H1 (cell line): ENCODE measurements at regions of chr2 and their contacts with region 1.

Region 1: GRCh38 chr2:96470636-96471035 is 34.5 kb downstream of the NEURL3 start:
- DNase-seq: peak; percentile 77 to 96
- H3K4me3 ChIP-seq: peak overlapping the region in 1 of 4 experiments; percentile 45; a peak in 2 of 8 replicates
- H3K27ac ChIP-seq: no peak overlapping the region
- H3K4me1 ChIP-seq: no peaks in the 10 kb centered on the region
- H3K27me3 ChIP-seq: no peaks in the 10 kb centered on the region
- CTCF ChIP-seq: peak; percentile 86 to 98 (median 89)
- EP300 ChIP-seq: no peak
- POLR2A ChIP-seq: no peak
- RAD21 ChIP-seq: peak; percentile 57 to 77

Region 2: DNA sequence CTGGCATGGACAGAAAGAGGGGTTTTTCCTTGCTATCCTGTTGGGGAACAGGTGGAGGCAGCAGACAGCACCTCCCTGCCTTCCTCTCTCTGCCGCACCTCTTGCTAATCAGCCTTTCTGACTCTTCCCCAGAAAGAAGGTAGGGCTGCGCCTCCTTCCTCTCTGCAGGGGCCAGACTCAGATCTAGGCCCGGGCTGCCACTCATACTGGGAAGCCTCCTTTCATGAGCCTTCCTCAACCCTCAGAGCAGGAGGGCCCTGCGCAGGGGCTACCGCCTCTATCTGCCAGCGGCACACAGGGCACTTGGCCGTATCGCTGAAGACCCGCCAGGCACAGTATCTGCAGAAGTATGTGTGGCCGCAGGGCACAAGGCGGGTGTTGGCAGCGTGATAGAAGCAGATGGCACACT is 27.4 kb after region 1 on chr2:
- CTCF ChIA-PET with region 1: interaction called, 20 read pairs
- POLR2A ChIA-PET with region 1: no interaction called
- DNase-seq: no peak
- H3K4me3 ChIP-seq: no peak overlapping the region
- H3K27ac ChIP-seq: no peak overlapping the region
- H3K4me1 ChIP-seq: peaks cover 0 to 5% (median 1%) of the 10 kb centered on the region in 4 experiments; a peak in 2 of 7 replicates
- H3K27me3 ChIP-seq: no peaks in the 10 kb centered on the region
- CTCF ChIP-seq: peak; percentile 53 to 57 (median 55)
- EP300 ChIP-seq: no peak
- POLR2A ChIP-seq: no peak
- RAD21 ChIP-seq: peak; percentile 25 to 35; a peak in 3 of 4 replicates

Region 3: DNA sequence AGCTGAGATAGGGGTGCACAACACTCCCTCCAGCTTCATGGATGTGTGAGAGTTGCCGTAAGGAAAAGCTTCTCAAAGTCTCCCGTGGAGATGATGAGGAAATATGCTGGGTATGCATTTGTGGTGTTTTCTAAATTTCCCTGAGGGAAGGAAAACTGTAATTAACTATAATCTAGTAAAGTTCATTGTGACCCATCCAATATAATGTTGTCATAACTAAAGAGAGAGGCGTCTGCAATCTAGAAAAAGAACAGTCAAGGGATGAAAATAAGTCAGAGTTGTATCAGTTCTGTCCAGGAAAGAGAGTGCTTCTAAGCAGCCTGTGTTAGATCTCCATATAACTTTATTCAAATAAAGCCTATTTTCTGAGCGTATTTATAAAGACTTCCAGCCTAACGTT is 276.5 kb after region 1 on chr2:
- CTCF ChIA-PET with region 1: no interaction called
- POLR2A ChIA-PET with region 1: no interaction called
- DNase-seq: no peak
- H3K4me3 ChIP-seq: no peak overlapping the region
- H3K27ac ChIP-seq: no peak overlapping the region
- H3K4me1 ChIP-seq: peaks cover 0 to 3% (median 0%) of the 10 kb centered on the region in 4 experiments; a peak in 1 of 7 replicates
- H3K27me3 ChIP-seq: no peaks in the 10 kb centered on the region
- CTCF ChIP-seq: no peak
- EP300 ChIP-seq: no peak
- POLR2A ChIP-seq: no peak
- RAD21 ChIP-seq: no peak